Colonic mucosa (tissue), 4 donors: ENCODE measurements at regions of chr3 and their contacts with region 1.

Region 1: GRCh38 chr3:67384760-67385397 is 269.5 kb downstream of the SUCLG2 start:
- DNase-seq: peak; percentile 30
- H3K4me3 ChIP-seq: no peak overlapping the region
- H3K27ac ChIP-seq: no peak overlapping the region
- H3K4me1 ChIP-seq: no peaks in the 10 kb centered on the region
- H3K27me3 ChIP-seq: no peaks in the 10 kb centered on the region
- CTCF ChIP-seq: peak; percentile 34

Region 2: DNA sequence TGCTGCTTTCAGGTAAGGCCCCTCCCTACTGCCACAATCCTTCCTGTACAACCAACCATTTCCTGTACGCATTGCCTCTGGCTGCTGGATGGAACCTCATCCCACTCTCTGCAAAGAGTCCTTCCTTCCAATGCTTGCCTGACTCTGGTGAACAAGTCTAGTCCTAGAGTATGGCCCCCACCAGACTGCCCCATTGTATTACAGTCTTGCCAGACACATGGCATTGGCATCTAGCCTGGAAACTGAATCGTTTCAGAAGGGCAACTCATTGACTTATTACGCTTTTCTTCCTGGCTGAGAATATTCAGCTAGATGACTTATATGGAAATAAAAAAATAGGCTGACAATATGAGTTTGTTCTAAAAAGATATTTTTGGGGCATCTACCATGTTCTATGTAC is 99.2 kb after region 1 on chr3:
- intact Hi-C with region 1: no loop called
- DNase-seq: no peak
- H3K4me3 ChIP-seq: no peak overlapping the region
- H3K27ac ChIP-seq: no peak overlapping the region
- H3K4me1 ChIP-seq: no peaks in the 10 kb centered on the region
- H3K27me3 ChIP-seq: no peaks in the 10 kb centered on the region
- CTCF ChIP-seq: no peak

Region 3: DNA sequence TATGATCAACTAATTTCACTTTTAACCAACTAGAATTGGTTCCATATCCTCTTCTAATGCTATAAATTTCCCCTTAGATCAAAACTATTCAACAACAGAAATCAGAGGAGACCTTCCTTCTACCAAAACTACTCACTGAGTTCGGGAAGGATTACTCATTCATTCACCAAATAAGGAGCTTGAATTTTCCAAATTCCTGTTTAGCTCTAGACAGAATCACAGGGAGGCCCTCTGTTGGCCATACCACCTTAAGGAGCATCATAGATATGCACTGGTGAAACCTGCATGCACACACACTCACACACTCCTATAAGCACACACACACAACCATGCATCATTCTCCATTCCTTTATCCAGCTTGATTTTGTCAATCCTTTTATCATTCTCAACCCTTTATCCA is 220.5 kb after region 1 on chr3:
- intact Hi-C with region 1: loop called (anchors 10 kb)
- DNase-seq: no peak
- H3K4me3 ChIP-seq: no peak overlapping the region
- H3K27ac ChIP-seq: no peak overlapping the region
- H3K4me1 ChIP-seq: no peaks in the 10 kb centered on the region
- H3K27me3 ChIP-seq: no peaks in the 10 kb centered on the region
- CTCF ChIP-seq: no peak

Region 4: DNA sequence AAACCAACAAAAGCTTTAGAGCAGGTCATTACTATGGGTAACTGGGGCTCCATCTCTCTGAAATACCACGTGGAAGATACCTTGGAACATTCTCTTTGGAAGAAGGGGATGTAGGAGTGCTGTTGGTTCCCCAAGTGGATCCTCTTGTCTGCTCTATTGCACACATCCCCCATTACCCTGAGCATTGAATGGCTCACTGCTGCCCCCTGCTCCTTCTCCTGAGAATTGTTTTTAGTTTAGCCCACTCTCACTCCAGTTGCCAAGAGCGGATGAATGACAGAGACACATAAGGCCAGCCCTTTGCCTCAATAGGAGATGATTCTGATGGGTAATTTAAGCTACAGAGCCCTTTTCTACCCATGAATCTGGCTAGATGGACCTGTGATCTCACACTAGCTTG is 405.2 kb after region 1 on chr3:
- intact Hi-C with region 1: loop called (anchors 5 kb)
- DNase-seq: peak; percentile 67
- H3K4me3 ChIP-seq: no peak overlapping the region
- H3K27ac ChIP-seq: no peak overlapping the region
- H3K4me1 ChIP-seq: no peaks in the 10 kb centered on the region
- H3K27me3 ChIP-seq: no peaks in the 10 kb centered on the region
- CTCF ChIP-seq: peak; percentile 63

Region 5: GRCh38 chr3:68876112-68876713 is 1491.3 kb after region 1 on chr3:
- intact Hi-C with region 1: loop called (anchors 10 kb)
- DNase-seq: peak; percentile 27
- H3K4me3 ChIP-seq: no peak overlapping the region
- H3K27ac ChIP-seq: no peak overlapping the region
- H3K4me1 ChIP-seq: no peaks in the 10 kb centered on the region
- H3K27me3 ChIP-seq: no peaks in the 10 kb centered on the region
- CTCF ChIP-seq: peak; percentile 88